RWPE1 (cell line): ENCODE measurements at regions of chr10 and their contacts with region 1.

Region 1: GRCh38 chr10:128035557-128035973 is 90.7 kb downstream of the MKI67 start:
- DNase-seq: no peak
- H3K27ac ChIP-seq: no peak overlapping the region; the same call in 1 of the 2 replicates
- CTCF ChIP-seq: no peak; the same call in 1 of the 2 replicates

Region 2: GRCh38 chr10:127945335-127945734 is 90.2 kb before region 1 on chr10:
- CTCF ChIA-PET with region 1: no interaction called
- POLR2A ChIA-PET with region 1: no interaction called
- DNase-seq: peak; percentile 83
- H3K27ac ChIP-seq: peak overlapping the region; percentile 70
- CTCF ChIP-seq: no peak

Region 3: DNA sequence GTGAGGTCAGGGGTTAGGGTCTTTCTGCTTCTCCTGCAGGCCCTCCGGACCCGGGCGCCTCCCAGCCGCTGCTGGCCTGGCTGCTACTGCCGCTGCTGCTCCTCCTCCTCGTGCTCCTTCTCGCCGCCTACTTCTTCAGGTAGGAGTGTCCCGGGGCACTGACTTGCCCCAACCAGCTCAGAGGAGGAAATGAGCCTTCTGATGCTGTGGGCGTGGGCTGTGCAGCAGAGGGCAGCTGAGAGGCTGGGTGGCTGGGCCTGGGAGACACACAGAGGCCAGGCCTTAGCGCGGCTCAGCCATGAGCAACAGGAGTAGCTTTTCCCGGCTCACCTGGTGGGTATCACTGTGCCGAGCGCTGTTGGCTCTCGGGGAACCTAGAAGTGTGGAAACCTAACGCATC is 11.8 kb after region 1 on chr10:
- CTCF ChIA-PET with region 1: interaction called, 4 read pairs
- POLR2A ChIA-PET with region 1: interaction called, 10 read pairs
- DNase-seq: peak; percentile 98
- H3K27ac ChIP-seq: peak overlapping the region; percentile 95
- CTCF ChIP-seq: no peak